BJ (cell line): ENCODE measurements at regions of chr9 and their contacts with region 1.

Region 1: DNA sequence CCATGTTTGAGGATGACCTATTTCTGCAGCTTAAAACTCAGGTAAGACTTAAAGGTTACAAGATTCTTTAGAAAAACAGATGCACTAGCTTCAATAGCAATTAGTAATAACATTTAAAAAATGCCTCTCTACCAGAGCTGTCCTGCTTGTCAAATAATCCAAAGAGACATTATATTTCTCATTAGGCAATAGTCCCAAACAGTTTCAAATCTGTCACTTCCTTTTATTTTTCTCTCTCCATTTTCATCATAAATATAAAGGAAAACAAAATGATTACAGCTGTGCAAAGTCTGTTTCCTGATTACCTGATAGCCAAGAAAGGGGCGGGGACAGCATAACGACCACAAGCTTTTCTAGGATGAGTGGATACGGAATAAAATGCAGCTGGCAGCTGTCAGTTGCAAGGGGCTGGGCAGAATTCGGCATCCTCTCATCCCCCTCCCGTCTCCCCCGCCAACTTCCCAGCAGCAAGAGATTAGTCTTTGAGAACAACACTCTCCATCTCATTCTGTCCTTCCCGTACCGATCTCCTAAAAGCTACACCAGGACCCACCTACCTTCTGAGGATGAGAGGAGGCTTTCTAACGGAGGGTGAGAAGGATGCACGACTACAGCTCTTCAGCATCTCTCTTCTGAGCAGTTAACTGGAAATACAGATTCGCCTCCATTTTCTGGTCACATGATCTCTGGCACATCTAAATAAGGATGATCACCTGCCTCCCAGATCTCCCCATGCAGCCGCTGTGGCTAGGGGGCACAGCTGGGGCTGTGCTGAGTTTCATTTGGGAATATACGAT is 72.5 kb upstream of the PCA3 start:
- DNase-seq: no peak
- H3K4me3 ChIP-seq: peak overlapping the region; percentile 18; the same call in 1 of the 2 replicates
- H3K27me3 ChIP-seq: peaks cover 5% of the 10 kb centered on the region
- CTCF ChIP-seq: no peak

Region 2: DNA sequence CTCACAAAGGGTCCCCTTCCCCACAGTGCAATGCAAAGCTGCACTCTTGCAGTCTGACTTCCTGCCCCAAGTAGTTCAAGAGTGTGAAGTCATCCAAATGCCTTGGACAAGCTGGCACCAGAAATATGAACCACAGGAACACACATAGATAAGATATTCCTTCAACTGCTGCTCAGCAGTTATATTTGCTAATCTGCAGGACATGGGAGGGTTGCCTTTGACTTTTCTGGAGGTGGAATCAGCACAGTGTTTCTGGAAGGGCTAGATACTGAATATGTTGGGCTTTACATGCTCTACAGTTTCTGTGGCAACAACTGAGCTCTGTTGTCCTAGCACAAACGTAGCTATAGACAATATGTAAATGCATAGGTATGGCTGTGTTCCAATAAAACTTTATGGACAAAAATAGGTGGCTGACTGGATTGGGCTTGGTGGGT is 24.2 kb before region 1 on chr9:
- CTCF ChIA-PET with region 1: interaction called, 10 read pairs
- POLR2A ChIA-PET with region 1: no interaction called
- DNase-seq: no peak
- H3K4me3 ChIP-seq: no peak overlapping the region
- H3K27me3 ChIP-seq: peaks cover 1% of the 10 kb centered on the region; the same call in 1 of the 2 replicates
- CTCF ChIP-seq: no peak